OCI-LY7 (cell line): ENCODE measurements at regions of chr7 and their contacts with region 1.

Region 1: GRCh38 chr7:101856473-101857357 is 39.3 kb downstream of the CUX1 start:
- DNase-seq: peak; percentile 92
- H3K4me3 ChIP-seq: peak overlapping the region; percentile 74
- H3K27ac ChIP-seq: peak overlapping the region; percentile 97
- H3K4me1 ChIP-seq: peaks cover 97% of the 10 kb centered on the region
- CTCF ChIP-seq: peak; percentile 73

Region 2: GRCh38 chr7:101688183-101688831 is 168.4 kb before region 1 on chr7:
- CTCF ChIA-PET with region 1: no interaction called
- POLR2A ChIA-PET with region 1: interaction called, 3 read pairs
- intact Hi-C with region 1: loop called (anchors 5 kb)
- DNase-seq: peak; percentile 88
- H3K4me3 ChIP-seq: peak overlapping the region; percentile 23
- H3K27ac ChIP-seq: peak overlapping the region; percentile 45
- H3K4me1 ChIP-seq: peaks cover 12% of the 10 kb centered on the region
- CTCF ChIP-seq: peak; percentile 92

Region 3: DNA sequence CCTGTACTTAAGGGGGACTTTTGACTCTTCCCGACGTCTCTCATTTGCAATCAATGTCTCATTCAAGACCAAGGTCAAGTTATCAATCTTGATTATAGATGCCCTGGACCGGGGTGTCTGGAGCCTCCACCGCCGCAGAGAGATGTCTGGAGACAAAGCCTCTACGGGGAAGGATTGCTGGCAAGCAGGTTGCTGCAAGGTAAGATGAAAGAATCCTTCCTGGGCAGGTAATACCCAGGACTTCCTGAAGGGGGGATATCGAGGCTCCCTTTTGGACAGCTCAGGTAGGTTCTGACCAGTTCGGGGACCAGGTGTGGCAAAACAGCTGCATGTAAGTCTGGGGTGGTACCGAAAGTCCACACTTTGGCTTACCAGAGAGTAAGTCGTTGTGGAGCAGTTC is 51.7 kb before region 1 on chr7:
- CTCF ChIA-PET with region 1: no interaction called
- POLR2A ChIA-PET with region 1: interaction called, 11 read pairs
- intact Hi-C with region 1: no loop called
- DNase-seq: peak; percentile 72
- H3K4me3 ChIP-seq: peak overlapping the region; percentile 51
- H3K27ac ChIP-seq: peak overlapping the region; percentile 80
- H3K4me1 ChIP-seq: peaks cover 78% of the 10 kb centered on the region
- CTCF ChIP-seq: peak; percentile 71

Region 4: GRCh38 chr7:101884671-101885596 is 28.2 kb after region 1 on chr7:
- CTCF ChIA-PET with region 1: no interaction called
- POLR2A ChIA-PET with region 1: interaction called, 5 read pairs
- intact Hi-C with region 1: loop called (anchors 2 kb)
- DNase-seq: peak; percentile 91
- H3K4me3 ChIP-seq: peak overlapping the region; percentile 61
- H3K27ac ChIP-seq: peak overlapping the region; percentile 93
- H3K4me1 ChIP-seq: peaks cover 100% of the 10 kb centered on the region
- CTCF ChIP-seq: no peak

Region 5: DNA sequence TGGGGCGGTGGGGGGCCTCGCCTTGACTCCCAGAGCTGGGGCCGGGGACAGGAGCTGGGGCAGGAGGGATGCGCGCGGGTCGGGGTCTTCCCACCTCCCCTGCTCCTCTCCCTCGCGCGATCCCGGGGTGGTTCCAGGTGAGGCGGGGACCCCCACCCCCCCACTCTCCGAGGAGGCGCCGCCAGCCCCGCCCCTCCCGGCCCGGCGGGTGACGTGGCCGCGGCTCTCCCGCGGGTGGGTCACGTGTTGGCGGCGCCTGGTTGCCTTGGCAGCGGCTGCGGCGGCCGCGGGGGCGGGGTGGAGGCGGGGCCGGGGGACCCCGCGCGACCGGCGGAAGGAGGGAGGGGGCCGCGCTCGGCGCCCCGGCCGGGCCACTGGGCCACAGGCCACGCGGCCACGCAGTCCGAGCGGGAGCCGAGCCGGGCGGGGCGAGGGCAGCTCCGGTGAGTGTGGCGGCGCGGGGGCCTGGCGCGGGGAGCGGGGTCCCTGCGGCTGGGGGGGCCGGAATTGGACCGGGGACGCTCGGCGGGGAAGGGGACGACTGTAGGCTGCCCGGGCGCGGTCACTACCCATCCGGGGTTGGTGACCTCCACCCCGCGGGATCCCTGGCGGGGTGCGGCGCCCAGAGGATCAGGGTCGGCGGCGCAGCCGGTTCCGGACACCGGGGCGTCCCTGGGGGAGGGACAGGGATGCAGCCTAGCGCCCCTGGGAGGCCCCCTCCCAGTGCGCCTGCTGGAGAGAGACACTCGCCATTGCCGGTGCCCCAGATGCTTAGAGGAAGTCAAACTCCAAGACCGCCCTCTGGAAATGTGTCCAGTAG is 576.7 kb after region 1 on chr7 and contains the start of gene ORAI2:
- CTCF ChIA-PET with region 1: no interaction called
- POLR2A ChIA-PET with region 1: no interaction called
- intact Hi-C with region 1: loop called (anchors 5 kb)
- DNase-seq: peak; percentile 89
- H3K4me3 ChIP-seq: peak within 1 kb of the TSS; percentile 80
- H3K27ac ChIP-seq: peak within 1 kb of the TSS; percentile 94
- H3K4me1 ChIP-seq: peaks cover 68% of the 10 kb centered on the region
- CTCF ChIP-seq: 0 out of 2 replicates have a peak, but pooled peaks have one; percentile 28
- total RNA-seq, gene ORAI2: 130 and 149 TPM in 2 replicates